AG04450 (cell line): ENCODE measurements at regions of chr9 and their contacts with region 1.

Region 1: DNA sequence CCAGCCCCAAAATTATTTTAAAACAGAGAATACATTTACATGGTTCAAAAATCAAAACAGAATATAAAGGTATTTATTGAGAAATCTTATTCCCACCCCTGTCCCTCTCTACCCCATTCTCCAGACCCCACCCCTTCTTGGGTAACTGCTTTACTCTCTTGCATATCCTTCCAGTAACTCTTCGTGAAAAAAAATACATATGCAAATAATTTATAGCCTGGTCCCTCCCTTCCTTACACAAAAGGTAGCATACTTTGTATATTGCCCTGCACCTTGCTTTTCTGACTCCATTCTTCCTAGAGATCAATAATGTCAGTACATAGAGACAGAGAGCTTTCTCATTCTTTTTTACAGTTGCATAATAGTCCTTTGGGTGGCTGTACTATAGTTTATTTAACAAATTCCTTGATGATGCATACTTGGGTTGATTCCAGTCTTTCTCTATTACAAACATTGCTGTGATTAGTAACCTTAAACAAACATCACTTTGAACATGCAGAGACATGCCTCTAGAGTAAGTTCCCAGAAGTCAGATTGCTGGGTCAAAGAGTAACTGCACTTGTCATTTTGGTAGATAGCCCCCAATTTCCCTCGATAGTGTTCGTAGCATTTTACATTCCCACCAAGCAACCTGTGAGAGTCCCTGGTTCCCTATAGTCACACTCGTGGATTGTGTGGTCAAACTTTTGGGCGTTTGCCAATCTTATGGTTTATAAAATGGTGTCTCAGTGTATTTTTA is 47.8 kb downstream of the STOM start:
- DNase-seq: peak; percentile 91
- H3K4me3 ChIP-seq: no peak overlapping the region
- H3K27ac ChIP-seq: peak overlapping the region; percentile 96
- H3K27me3 ChIP-seq: no peaks in the 10 kb centered on the region
- CTCF ChIP-seq: no peak

Region 2: GRCh38 chr9:121233906-121234901 is 88.0 kb before region 1 on chr9:
- CTCF ChIA-PET with region 1: interaction called, 12 read pairs
- POLR2A ChIA-PET with region 1: no interaction called
- DNase-seq: no peak
- H3K4me3 ChIP-seq: no peak overlapping the region
- H3K27ac ChIP-seq: peak overlapping the region; percentile 85
- H3K27me3 ChIP-seq: no peaks in the 10 kb centered on the region
- CTCF ChIP-seq: no peak

Region 3: GRCh38 chr9:121286973-121287741 is 35.0 kb before region 1 on chr9:
- CTCF ChIA-PET with region 1: interaction called, 29 read pairs
- POLR2A ChIA-PET with region 1: no interaction called
- DNase-seq: peak; percentile 80
- H3K4me3 ChIP-seq: peak overlapping the region; percentile 20; the same call in 1 of the 2 replicates
- H3K27ac ChIP-seq: peak overlapping the region; percentile 93
- H3K27me3 ChIP-seq: no peaks in the 10 kb centered on the region
- CTCF ChIP-seq: peak; percentile 27; the same call in 1 of the 2 replicates

Region 4: GRCh38 chr9:121350993-121351561 is 28.9 kb after region 1 on chr9:
- CTCF ChIA-PET with region 1: interaction called, 32 read pairs
- POLR2A ChIA-PET with region 1: interaction called, 3 read pairs
- DNase-seq: peak; percentile 86
- H3K4me3 ChIP-seq: no peak overlapping the region
- H3K27ac ChIP-seq: peak overlapping the region; percentile 52
- H3K27me3 ChIP-seq: no peaks in the 10 kb centered on the region
- CTCF ChIP-seq: no peak

Region 5: GRCh38 chr9:121376214-121376830 is 54.1 kb after region 1 on chr9:
- CTCF ChIA-PET with region 1: interaction called, 169 read pairs
- POLR2A ChIA-PET with region 1: interaction called, 9 read pairs
- DNase-seq: no peak
- H3K4me3 ChIP-seq: no peak overlapping the region
- H3K27ac ChIP-seq: no peak overlapping the region
- H3K27me3 ChIP-seq: no peaks in the 10 kb centered on the region
- CTCF ChIP-seq: peak; percentile 53

Region 6: DNA sequence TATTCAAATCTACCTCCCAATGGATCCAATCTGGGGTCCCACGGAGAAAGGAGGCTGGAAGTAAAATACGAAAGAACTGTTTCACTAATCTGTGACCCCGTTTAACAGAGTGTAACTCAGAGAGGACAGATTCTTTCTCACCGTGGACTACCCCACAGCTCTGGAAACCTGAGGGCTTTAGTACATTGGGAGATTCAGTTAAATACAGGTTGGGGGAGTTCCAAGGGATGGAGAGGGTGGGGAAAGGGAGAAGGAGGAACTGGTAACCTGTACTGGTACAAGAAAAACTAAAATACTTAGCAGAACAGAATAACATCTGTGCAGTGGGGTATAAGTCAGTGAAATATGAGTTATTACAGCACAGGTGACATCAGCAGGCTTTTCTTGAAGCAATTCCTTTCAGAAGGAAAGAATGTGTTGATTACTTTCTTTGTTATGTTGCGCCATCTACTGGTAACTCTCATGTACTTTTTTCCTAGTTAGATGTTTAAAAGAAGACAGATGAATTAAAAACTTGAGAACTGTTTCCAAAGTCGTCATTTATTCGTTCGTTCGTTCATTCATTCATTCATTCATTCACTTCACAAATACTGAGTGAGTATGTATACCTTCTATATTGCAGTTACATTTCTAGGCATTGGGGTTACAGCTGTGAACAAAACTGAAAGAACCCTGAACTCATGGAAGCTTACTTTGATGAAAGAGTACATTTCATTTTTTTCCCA is 77.8 kb after region 1 on chr9:
- CTCF ChIA-PET with region 1: interaction called, 202 read pairs
- POLR2A ChIA-PET with region 1: interaction called, 10 read pairs
- DNase-seq: peak; percentile 53
- H3K4me3 ChIP-seq: no peak overlapping the region
- H3K27ac ChIP-seq: no peak overlapping the region
- H3K27me3 ChIP-seq: no peaks in the 10 kb centered on the region
- CTCF ChIP-seq: peak; percentile 61